ENCODE measurements at regions of chr10 and their contacts with region 1.

Region 1: DNA sequence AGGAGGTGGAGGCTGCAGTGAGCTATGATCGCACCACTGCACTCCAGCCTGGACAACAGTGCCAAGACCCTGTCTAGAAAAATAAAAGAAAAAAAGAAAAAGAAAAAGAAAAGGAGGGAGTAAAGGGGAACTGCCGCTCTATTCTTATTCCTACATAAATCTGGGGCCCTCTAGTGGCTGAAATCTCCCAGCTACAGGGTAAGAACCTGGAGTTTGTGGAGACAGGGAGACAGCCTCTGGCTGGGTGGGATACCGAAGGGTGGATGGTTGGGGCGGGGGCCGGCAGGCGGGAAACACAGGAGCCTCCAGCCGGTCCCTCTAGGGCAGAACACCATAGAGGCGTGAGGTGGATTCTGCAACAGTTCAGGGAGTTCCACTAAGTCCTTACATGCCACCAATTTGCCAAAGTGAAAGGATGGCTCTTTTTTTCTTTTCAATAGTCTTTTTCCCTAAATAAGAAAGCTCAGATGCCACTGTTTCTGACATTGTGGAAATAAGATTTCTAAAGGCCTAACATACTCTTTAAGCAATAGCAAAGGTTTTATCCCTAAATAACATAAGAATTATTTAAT is 117.3 kb downstream of the SVIL start:
- DNase-seq: peak; percentile 16
- ATAC-seq: peak; percentile 83
- H3K4me3 ChIP-seq: no peak overlapping the region
- H3K27ac ChIP-seq: no peak overlapping the region
- H3K4me1 ChIP-seq: no peaks in the 10 kb centered on the region
- H3K27me3 ChIP-seq: no peaks in the 10 kb centered on the region
- CTCF ChIP-seq: peak; percentile 21 to 79 (median 73); a peak in 5 of 6 replicates
- POLR2A ChIP-seq: no peak
- RAD21 ChIP-seq: no peak

Region 2: GRCh38 chr10:29496341-29497162 is 20.9 kb before region 1 on chr10:
- CTCF ChIA-PET with region 1: interaction called, 23 read pairs
- POLR2A ChIA-PET with region 1: no interaction called
- RAD21 ChIA-PET with region 1: no interaction called
- intact Hi-C with region 1: no loop called
- DNase-seq: peak; percentile 28
- ATAC-seq: peak; percentile 99
- H3K4me3 ChIP-seq: no peak overlapping the region
- H3K27ac ChIP-seq: no peak overlapping the region
- H3K4me1 ChIP-seq: peaks cover under 1 to 3% of the 10 kb centered on the region in 2 experiments; a peak in 3 of 4 replicates
- H3K27me3 ChIP-seq: no peaks in the 10 kb centered on the region
- CTCF ChIP-seq: peak; percentile 77 to 99 (median 97)
- POLR2A ChIP-seq: no peak
- RAD21 ChIP-seq: peak; percentile 73

Region 3: DNA sequence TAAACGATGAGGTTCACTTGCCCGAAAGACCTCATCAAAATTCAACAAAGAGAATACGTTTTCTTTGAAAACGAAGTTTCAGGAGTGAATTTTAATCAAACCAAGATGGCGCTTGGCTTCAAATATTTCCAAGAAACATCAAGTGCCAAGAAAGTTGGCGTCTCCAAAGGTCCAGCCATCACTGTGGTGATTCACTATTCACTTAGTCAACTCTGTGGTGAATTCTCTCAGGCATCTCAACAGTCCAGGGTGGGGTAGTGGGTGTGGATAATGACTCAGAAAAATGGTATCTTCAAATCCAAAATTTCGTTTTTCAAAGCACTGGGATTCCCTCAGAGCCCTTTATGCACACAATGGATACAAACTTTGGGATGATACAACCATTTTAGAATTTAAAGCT is 15.7 kb before region 1 on chr10:
- CTCF ChIA-PET with region 1: interaction called, 23 read pairs
- POLR2A ChIA-PET with region 1: no interaction called
- RAD21 ChIA-PET with region 1: no interaction called
- intact Hi-C with region 1: no loop called
- DNase-seq: peak; percentile 59
- ATAC-seq: peak; percentile 88
- H3K4me3 ChIP-seq: no peak overlapping the region
- H3K27ac ChIP-seq: no peak overlapping the region
- H3K4me1 ChIP-seq: peaks cover 4 to 14% of the 10 kb centered on the region in 2 experiments; a peak in 3 of 4 replicates
- H3K27me3 ChIP-seq: no peaks in the 10 kb centered on the region
- CTCF ChIP-seq: no peak
- POLR2A ChIP-seq: no peak
- RAD21 ChIP-seq: no peak